ENCODE measurements at regions of chr7 and their contacts with region 1.

Region 1: GRCh38 chr7:90346336-90347125 is at the start of gene GTPBP10:
- DNase-seq: peak; percentile 97
- ATAC-seq: peak; percentile 96
- H3K4me3 Mint-ChIP-seq: peak within 1 kb of the TSS; percentile 92
- H3K27ac Mint-ChIP-seq: peak within 1 kb of the TSS; percentile 94
- H3K4me1 Mint-ChIP-seq: peaks cover 36% of the 10 kb centered on the region
- H3K27me3 Mint-ChIP-seq: no peaks in the 10 kb centered on the region
- total RNA-seq, gene GTPBP10: 40.8 to 42.5 TPM

Region 2: DNA sequence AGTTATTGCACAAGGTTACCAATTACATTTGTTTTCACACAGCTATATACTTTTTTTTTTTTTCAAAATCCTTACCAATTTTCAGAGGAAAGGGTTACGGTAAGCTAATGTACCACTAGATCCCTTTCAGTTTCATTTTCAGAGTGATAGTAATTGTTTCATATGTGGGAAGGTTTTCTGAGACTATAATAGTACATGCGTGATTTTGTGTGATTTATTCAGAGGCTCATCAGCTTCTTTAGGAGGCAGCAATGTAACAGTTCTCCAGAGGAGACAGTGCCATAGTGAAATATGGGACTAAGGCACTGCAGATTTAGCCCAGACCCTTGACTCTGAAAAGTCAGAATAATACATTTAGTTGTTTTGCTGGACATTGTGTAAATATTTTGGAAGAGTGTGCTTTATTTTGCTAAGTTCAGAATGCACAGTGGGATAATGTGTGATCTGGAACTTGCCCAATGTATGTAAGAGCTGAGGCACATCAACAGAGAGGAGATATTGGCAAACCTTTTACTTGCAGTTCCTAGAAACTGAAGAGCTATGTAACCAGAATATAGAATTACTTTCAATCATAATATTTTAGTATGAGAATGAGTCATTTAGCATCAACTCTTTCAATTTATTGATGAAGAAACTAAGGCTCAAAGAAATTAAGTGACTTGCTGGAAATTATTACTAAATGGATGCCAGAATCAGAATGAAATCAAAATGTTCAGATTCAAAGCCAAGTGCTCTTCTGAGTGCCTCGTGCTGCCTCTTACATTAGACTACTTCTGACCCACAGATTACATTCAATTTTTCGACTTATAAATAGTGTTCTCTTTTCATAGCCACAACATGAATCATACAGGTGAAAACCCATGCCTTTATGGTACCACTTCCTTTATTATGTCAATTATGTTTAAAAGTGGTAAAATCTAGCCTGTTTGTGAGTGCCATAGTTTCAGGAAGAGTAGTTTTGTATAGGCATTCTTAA is 1343.3 kb before region 1 on chr7:
- CTCF ChIA-PET with region 1: no interaction called
- POLR2A ChIA-PET with region 1: no interaction called
- intact Hi-C with region 1: loop called in 1 of 2 experiments (anchors 5 kb)
- DNase-seq: no peak
- ATAC-seq: peak; percentile 87
- H3K4me3 Mint-ChIP-seq: peak overlapping the region; percentile 48
- H3K27ac Mint-ChIP-seq: peak overlapping the region; percentile 83
- H3K4me1 Mint-ChIP-seq: peaks cover 26% of the 10 kb centered on the region
- H3K27me3 Mint-ChIP-seq: peaks cover 5% of the 10 kb centered on the region

Region 3: DNA sequence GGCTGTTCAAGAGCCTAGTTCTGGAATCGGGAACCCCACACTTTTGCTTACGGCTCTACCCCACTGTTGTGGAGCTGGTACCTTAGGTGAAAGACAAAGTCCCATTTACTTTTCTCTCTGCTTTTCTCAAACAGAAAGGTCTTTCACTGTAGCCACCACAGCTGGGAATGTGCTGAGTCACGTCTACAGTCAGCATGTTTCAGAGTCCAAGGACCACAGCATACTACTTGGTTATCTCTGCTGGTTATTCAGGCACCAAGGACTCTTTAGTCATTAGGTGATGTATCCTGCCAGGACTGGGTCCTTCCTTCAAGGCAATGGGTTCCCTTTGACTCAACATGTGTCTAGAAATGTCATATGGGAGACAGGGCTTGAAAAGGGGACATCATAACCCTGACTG is 459.0 kb before region 1 on chr7:
- CTCF ChIA-PET with region 1: no interaction called
- POLR2A ChIA-PET with region 1: no interaction called
- intact Hi-C with region 1: no loop called
- DNase-seq: no peak
- ATAC-seq: no peak
- H3K4me3 Mint-ChIP-seq: no peak overlapping the region
- H3K27ac Mint-ChIP-seq: no peak overlapping the region
- H3K4me1 Mint-ChIP-seq: no peaks in the 10 kb centered on the region
- H3K27me3 Mint-ChIP-seq: no peaks in the 10 kb centered on the region

Region 4: GRCh38 chr7:90244909-90245851 is 101.4 kb before region 1 on chr7 and contains the start of gene CFAP69:
- CTCF ChIA-PET with region 1: no interaction called
- POLR2A ChIA-PET with region 1: no interaction called
- intact Hi-C with region 1: loop called (anchors 1 to 5 kb)
- DNase-seq: peak; percentile 92
- ATAC-seq: peak; percentile 97
- H3K4me3 Mint-ChIP-seq: peak within 1 kb of the TSS; percentile 77
- H3K27ac Mint-ChIP-seq: peak within 1 kb of the TSS; percentile 0
- H3K4me1 Mint-ChIP-seq: peaks cover 16% of the 10 kb centered on the region
- H3K27me3 Mint-ChIP-seq: peaks cover 32% of the 10 kb centered on the region
- total RNA-seq, gene CFAP69: 0.25 to 0.70 TPM

Region 5: DNA sequence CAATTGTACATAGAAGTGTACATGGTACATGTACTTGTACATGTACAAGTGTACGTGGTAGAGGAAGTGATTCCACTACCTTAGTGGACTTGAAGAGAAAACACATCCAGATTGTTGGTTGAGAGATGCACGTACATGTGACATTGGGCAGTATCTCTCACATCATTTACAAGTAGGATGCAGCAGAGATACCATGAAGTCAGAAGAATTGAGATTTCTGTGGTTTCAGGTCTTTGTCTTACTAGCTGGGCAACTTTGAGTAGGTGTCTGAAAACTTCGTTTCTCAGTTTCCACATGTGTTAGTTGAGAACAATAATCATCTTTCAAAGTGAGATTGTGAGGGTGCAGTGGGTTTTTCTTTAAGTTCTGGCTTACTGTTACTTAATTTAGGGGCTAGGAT is 78.2 kb after region 1 on chr7:
- CTCF ChIA-PET with region 1: interaction called, 5 read pairs
- POLR2A ChIA-PET with region 1: no interaction called
- intact Hi-C with region 1: loop called in 1 of 2 experiments (anchors 1 kb)
- DNase-seq: no peak
- ATAC-seq: peak; percentile 93
- H3K4me3 Mint-ChIP-seq: no peak overlapping the region
- H3K27ac Mint-ChIP-seq: peak overlapping the region; percentile 48
- H3K4me1 Mint-ChIP-seq: peaks cover 18% of the 10 kb centered on the region
- H3K27me3 Mint-ChIP-seq: peaks cover 3% of the 10 kb centered on the region

Region 6: GRCh38 chr7:91264046-91264923 is 917.8 kb after region 1 on chr7 and contains the start of gene FZD1:
- CTCF ChIA-PET with region 1: no interaction called
- POLR2A ChIA-PET with region 1: no interaction called
- intact Hi-C with region 1: loop called in 1 of 2 experiments (anchors 10 kb)
- DNase-seq: peak; percentile 89
- ATAC-seq: peak; percentile 90
- H3K4me3 Mint-ChIP-seq: peak within 1 kb of the TSS; percentile 76
- H3K27ac Mint-ChIP-seq: peak within 1 kb of the TSS; percentile 65
- H3K4me1 Mint-ChIP-seq: peaks cover 8% of the 10 kb centered on the region
- H3K27me3 Mint-ChIP-seq: peaks cover 41% of the 10 kb centered on the region
- total RNA-seq, gene FZD1: 0.47 to 0.69 TPM

Region 7: GRCh38 chr7:92134271-92135051 is 1787.9 kb after region 1 on chr7 and contains the start of gene CYP51A1:
- CTCF ChIA-PET with region 1: no interaction called
- POLR2A ChIA-PET with region 1: no interaction called
- intact Hi-C with region 1: loop called in 1 of 2 experiments (anchors 1 kb)
- DNase-seq: peak; percentile 94
- ATAC-seq: peak; percentile 92
- H3K4me3 Mint-ChIP-seq: peak within 1 kb of the TSS; percentile 98
- H3K27ac Mint-ChIP-seq: peak within 1 kb of the TSS; percentile 99
- H3K4me1 Mint-ChIP-seq: peaks cover 20% of the 10 kb centered on the region
- H3K27me3 Mint-ChIP-seq: no peaks in the 10 kb centered on the region
- total RNA-seq, gene CYP51A1: 57.8 to 63.3 TPM

Measured in activated CD4-positive, alpha-beta T cell treated with anti-CD3 and anti-CD28 coated beads for 36 hours (primary cell).